ENCODE measurements at regions of chr3 and their contacts with region 1.

Region 1: GRCh38 chr3:32684800-32685542 is at the start of gene CNOT10:
- DNase-seq: peak; percentile 86 to 90
- ATAC-seq: peak; percentile 96
- H3K4me3 ChIP-seq: peak within 1 kb of the TSS; percentile 69 to 98 (median 92)
- H3K27ac ChIP-seq: peak within 1 kb of the TSS; percentile 80 to 87 (median 82)
- H3K4me1 ChIP-seq: peaks cover 13 to 16% of the 10 kb centered on the region in 2 donors
- H3K27me3 ChIP-seq: no peaks in the 10 kb centered on the region
- CTCF ChIP-seq: peak in 2 of 5 experiments; percentile 9 to 38
- POLR2A ChIP-seq: peak in 1 of 2 donors; percentile 64
- total RNA-seq, gene CNOT10: 10.2 to 16.8 (median 10.9) TPM

Region 2: GRCh38 chr3:32502118-32502945 is 182.6 kb before region 1 on chr3 and contains the start of gene CMTM6:
- in situ Hi-C with region 1: no loop called
- intact Hi-C with region 1: loop called (anchors 2 kb)
- DNase-seq: peak; percentile 68 to 71
- ATAC-seq: peak; percentile 95 to 96
- H3K4me3 ChIP-seq: peak within 1 kb of the TSS; percentile 86 to 99 (median 93)
- H3K27ac ChIP-seq: peak within 1 kb of the TSS; percentile 91 to 94 (median 94)
- H3K4me1 ChIP-seq: peaks cover 9 to 14% of the 10 kb centered on the region in 2 donors
- H3K27me3 ChIP-seq: no peaks in the 10 kb centered on the region
- CTCF ChIP-seq: no peak
- POLR2A ChIP-seq: peak; percentile 62 to 63
- total RNA-seq, gene CMTM6: 3.7 to 8.8 (median 7.3) TPM